PC-3 (cell line): ENCODE measurements at regions of chr9 and their contacts with region 1.

Region 1: DNA sequence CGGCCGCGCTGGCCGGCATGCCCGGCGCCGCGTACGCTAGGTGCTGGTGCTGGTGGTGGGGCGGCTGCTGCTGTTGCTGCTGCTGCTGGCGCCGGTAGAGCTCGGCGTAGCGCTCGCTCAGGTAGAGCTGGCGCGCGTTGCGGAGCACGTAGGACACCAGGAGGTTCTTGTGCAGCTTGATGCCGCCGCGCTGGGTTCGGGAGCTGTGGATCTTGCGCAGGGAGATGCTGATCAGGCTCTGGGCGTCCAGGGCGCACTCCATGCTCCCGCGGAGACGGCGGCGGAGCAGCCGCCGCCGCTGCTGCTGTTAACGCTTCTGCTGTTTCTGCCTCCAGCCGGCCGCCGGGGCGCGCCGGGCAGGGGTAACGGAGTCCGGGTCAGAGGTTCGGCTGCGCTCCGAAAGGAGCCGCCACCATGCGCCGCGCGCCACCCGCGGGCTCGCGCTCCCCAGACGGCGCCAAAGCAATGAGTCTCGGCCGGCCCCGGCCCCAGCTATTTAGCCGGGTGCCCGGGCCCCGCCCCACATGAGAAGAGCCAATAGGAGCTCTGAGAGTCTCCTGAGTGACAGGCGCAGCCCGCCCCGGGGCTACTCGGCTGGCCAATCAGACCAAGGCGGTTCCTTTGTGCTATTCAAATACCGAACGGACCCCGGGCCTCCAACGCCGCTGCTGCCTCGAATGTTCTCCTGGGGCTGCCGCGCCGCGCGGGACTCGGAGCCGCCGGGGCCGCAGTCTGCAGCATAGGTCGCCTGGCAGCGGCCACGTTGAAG is at the start of gene IER5L:
- DNase-seq: peak; percentile 92
- ATAC-seq: peak; percentile 69
- H3K4me3 ChIP-seq: peak within 1 kb of the TSS; percentile 90
- H3K27ac ChIP-seq: no peak within 1 kb of the TSS
- H3K4me1 ChIP-seq: peaks cover 18% of the 10 kb centered on the region
- H3K27me3 ChIP-seq: no peaks in the 10 kb centered on the region
- CTCF ChIP-seq: no peak
- total RNA-seq, gene IER5L: 42.8 and 46.1 TPM in 2 replicates

Region 2: DNA sequence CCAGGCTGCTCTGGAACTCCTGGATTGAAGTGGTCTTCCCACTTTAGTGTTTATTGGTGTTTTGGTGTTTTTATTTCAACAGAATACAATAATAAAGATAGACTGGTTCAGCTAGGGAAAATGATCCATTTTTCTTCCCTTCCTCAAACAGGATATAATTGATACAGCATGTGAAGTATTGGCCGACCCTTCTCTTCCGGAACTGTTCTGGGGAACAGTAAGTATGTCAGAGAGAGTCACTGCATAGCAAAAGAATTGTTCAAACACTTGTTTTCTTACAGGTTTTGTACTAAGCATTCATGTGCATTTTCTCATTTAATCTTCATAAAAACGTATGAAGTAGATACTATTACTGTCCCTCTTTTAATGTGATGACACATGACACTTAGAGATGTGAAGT is 198.9 kb before region 1 on chr9:
- CTCF ChIA-PET with region 1: no interaction called
- POLR2A ChIA-PET with region 1: no interaction called
- intact Hi-C with region 1: no loop called
- DNase-seq: no peak
- ATAC-seq: no peak
- H3K4me3 ChIP-seq: no peak overlapping the region
- H3K27ac ChIP-seq: no peak overlapping the region
- H3K4me1 ChIP-seq: no peaks in the 10 kb centered on the region
- H3K27me3 ChIP-seq: no peaks in the 10 kb centered on the region
- CTCF ChIP-seq: no peak

Region 3: DNA sequence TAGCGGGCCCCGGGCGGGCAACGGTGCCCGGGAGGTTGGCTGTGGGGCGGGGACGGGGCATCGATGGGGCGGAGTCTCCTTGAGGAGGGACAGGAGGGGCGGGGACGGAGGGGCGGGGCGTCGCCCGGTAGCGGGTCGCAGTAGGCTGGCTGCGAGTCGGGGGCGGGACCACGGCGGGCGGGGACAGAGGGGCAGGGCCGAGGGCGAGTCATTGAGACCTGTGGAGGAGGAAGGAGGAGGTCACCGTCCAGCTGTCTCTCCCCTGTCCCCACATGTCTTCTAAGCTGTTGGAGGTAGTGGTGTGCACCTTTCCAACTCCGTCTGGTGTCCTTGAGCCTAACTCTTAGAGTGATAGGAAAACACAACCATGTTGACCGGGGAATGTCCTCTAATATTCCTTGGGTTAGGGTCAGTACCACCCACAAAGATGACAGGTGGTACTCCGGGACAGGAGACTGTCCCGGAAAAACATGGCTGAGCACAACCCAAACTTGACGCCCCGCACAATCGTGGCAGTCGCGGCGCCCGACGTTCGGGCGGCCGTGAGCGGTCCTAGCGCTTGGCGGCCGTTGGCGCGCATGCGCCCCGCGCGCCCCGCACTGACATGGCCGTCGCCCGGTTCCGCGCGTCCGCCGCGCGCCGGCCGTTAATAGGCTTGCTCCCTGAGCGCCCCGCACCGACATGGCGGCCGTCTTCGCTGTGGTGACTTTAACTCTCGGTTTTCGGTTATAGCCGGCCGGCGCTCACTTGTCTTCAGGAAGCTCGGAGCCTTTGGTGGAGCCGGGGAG is 67.0 kb before region 1 on chr9 and contains the starts of genes CRAT and PTPA:
- CTCF ChIA-PET with region 1: no interaction called
- POLR2A ChIA-PET with region 1: interaction called, 10 read pairs
- intact Hi-C with region 1: no loop called
- DNase-seq: peak; percentile 85
- ATAC-seq: peak; percentile 81
- H3K4me3 ChIP-seq: peak within 1 kb of the TSS; percentile 78
- H3K27ac ChIP-seq: peak within 1 kb of the TSS; percentile 71
- H3K4me1 ChIP-seq: peaks cover 12% of the 10 kb centered on the region
- H3K27me3 ChIP-seq: no peaks in the 10 kb centered on the region
- CTCF ChIP-seq: no peak
- total RNA-seq, gene CRAT: 12.8 and 16.1 TPM in 2 replicates
- total RNA-seq, gene PTPA: 138 and 154 TPM in 2 replicates

Region 4: GRCh38 chr9:129139993-129140396 is 38.0 kb before region 1 on chr9:
- CTCF ChIA-PET with region 1: interaction called, 3 read pairs
- POLR2A ChIA-PET with region 1: interaction called, 6 read pairs
- intact Hi-C with region 1: loop called (anchors 2 kb)
- DNase-seq: peak; percentile 95
- ATAC-seq: peak; percentile 74
- H3K4me3 ChIP-seq: peak overlapping the region; percentile 60
- H3K27ac ChIP-seq: peak overlapping the region; percentile 100
- H3K4me1 ChIP-seq: peaks cover 30% of the 10 kb centered on the region
- H3K27me3 ChIP-seq: no peaks in the 10 kb centered on the region
- CTCF ChIP-seq: no peak

Region 5: DNA sequence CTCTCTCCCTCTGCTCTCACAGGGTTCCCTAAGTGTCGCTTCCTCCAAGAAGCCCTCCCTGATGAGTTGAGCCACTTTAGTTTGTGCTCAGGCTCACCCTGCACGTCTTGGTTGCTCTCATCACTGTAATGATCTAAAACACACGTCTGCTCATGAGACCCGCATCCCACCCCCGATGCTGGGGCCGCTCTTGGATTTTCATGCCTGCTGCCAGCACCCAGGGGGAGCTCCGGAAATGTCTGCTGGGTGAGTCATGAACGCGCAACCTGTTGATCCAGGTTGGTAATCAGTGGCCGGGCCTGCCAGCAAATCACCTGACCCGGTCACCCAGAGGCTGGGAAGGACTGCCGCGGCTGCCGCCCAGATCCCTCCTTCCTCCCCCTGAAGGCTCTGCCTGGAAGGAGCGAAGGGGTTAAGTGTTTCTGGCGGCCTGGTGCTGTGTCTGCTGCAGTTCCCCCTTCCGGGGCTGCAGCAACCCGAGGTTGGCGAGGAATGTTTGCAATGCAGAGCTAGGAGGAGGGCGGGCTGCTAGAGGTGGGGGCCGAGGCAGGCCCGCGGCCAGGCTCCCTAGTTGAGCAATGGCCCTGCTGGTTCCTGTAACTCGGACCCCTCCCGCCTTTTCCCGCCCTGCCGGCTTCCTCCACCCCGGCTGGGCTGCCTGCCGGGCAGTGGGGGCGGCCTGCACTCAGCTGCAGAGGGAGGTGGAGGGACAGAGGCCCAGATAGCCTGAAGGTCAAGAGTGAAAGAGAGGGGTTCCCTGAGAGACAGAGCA is 156.2 kb after region 1 on chr9:
- CTCF ChIA-PET with region 1: no interaction called
- POLR2A ChIA-PET with region 1: interaction called, 4 read pairs
- intact Hi-C with region 1: loop called (anchors 10 kb)
- DNase-seq: peak; percentile 94
- ATAC-seq: peak; percentile 86
- H3K4me3 ChIP-seq: peak overlapping the region; percentile 42
- H3K27ac ChIP-seq: peak overlapping the region; percentile 94
- H3K4me1 ChIP-seq: peaks cover 18% of the 10 kb centered on the region
- H3K27me3 ChIP-seq: no peaks in the 10 kb centered on the region
- CTCF ChIP-seq: no peak; the same call in 1 of the 2 replicates

Region 6: GRCh38 chr9:129368434-129368978 is 190.5 kb after region 1 on chr9:
- CTCF ChIA-PET with region 1: no interaction called
- POLR2A ChIA-PET with region 1: no interaction called
- intact Hi-C with region 1: no loop called
- DNase-seq: no peak
- ATAC-seq: no peak
- H3K4me3 ChIP-seq: no peak overlapping the region
- H3K27ac ChIP-seq: no peak overlapping the region
- H3K4me1 ChIP-seq: no peaks in the 10 kb centered on the region
- H3K27me3 ChIP-seq: no peaks in the 10 kb centered on the region
- CTCF ChIP-seq: no peak

Region 7: GRCh38 chr9:129482521-129483414 is 304.8 kb after region 1 on chr9:
- CTCF ChIA-PET with region 1: no interaction called
- POLR2A ChIA-PET with region 1: interaction called, 4 read pairs
- intact Hi-C with region 1: loop called (anchors 2 kb)
- DNase-seq: peak; percentile 84
- ATAC-seq: peak; percentile 72
- H3K4me3 ChIP-seq: peak overlapping the region; percentile 67
- H3K27ac ChIP-seq: peak overlapping the region; percentile 98
- H3K4me1 ChIP-seq: peaks cover 37% of the 10 kb centered on the region
- H3K27me3 ChIP-seq: no peaks in the 10 kb centered on the region
- CTCF ChIP-seq: no peak

Region 8: DNA sequence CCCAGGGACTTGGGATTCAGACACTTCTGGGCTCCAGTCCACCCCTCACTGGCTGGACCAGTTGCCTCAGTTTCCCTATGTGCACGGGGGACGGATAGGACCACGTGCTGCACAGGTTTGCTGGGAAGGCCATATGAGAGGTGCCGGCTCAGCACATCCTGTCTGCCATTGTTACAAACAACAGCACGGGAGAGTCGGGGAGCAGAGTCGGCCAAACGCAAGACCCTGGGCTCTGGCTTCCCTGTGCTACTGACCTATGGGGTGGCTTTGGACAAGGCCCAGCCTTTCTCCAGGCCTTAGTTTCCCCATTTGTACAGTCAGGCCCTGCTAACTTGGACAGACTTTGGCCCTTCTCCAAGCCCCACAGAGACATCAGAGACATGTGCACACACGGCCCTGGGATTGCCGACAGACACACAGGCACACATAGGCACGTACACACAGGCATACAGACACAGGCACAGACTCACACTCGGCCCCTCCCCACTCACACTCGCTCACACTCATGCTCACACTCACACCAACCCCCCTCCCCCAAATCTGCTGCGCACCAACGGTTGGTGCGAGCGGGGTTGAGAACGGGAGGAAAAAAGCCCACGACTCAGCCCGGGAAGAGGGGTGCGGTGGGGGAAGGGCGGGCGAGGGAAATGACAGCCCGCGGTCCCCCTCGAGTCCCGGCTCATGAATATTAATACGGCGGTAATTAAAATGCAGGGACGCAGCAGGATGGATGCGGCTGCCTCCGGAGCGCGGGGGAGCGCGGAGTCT is 309.9 kb after region 1 on chr9:
- CTCF ChIA-PET with region 1: no interaction called
- POLR2A ChIA-PET with region 1: interaction called, 4 read pairs
- intact Hi-C with region 1: loop called (anchors 2 kb)
- DNase-seq: no peak
- ATAC-seq: peak; percentile 7; the same call in 1 of the 2 replicates
- H3K4me3 ChIP-seq: peak overlapping the region; percentile 64
- H3K27ac ChIP-seq: peak overlapping the region; percentile 98
- H3K4me1 ChIP-seq: peaks cover 61% of the 10 kb centered on the region
- H3K27me3 ChIP-seq: no peaks in the 10 kb centered on the region
- CTCF ChIP-seq: no peak

Region 9: GRCh38 chr9:129610473-129611301 is 432.7 kb after region 1 on chr9:
- CTCF ChIA-PET with region 1: no interaction called
- POLR2A ChIA-PET with region 1: no interaction called
- intact Hi-C with region 1: loop called (anchors 5 kb)
- DNase-seq: peak; percentile 67
- ATAC-seq: peak; percentile 45
- H3K4me3 ChIP-seq: peak overlapping the region; percentile 75
- H3K27ac ChIP-seq: no peak overlapping the region
- H3K4me1 ChIP-seq: peaks cover 8% of the 10 kb centered on the region; the same call in 1 of the 2 replicates
- H3K27me3 ChIP-seq: no peaks in the 10 kb centered on the region
- CTCF ChIP-seq: peak; percentile 72